ENCODE measurements at regions of chr4 and their contacts with region 1.

Region 1: GRCh38 chr4:81003597-81004111 is 26.9 kb upstream of the BMP3 start:
- DNase-seq: peak; percentile 95
- H3K4me3 ChIP-seq: peak overlapping the region; percentile 33
- H3K27ac ChIP-seq: peak overlapping the region; percentile 96
- H3K4me1 ChIP-seq: peaks cover 33% of the 10 kb centered on the region
- CTCF ChIP-seq: no peak

Region 2: DNA sequence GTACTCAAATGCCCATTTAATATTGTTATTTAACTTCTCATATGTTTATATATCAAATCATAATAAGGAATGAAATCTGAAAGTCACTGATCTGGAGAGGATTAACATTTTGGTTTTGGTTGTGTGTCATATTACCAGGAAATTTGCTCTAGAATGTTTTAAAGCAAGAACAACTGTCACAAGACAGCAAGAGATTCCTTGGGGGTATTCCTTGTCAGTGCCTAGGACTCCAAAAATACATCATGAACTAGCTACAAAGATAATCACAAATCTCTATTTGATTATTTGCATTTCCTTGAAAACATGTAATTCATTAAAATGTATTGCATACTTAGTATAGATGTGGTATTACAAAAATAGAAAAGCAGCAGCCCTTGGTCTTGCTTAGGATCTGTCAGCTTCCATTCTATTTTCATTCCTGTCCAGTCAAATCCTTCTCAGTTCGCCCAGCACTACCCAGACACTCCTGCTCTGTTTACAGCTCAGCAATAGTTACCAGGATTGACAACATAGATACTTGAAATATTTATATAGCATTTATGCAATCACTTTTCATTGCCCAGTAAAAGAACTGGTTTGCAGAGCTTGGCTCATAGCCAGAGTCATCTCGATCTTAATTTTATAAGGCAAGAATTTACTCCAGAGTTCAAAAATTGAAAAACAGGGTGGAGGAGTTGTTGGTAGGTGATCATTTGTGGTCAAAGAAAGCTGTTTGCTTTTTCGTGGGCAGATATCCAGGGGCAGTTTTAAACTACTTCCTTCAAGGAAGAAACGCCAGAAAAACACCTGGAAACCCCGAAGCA is 17.7 kb after region 1 on chr4:
- CTCF ChIA-PET with region 1: no interaction called
- POLR2A ChIA-PET with region 1: interaction called, 12 read pairs
- intact Hi-C with region 1: no loop called
- DNase-seq: no peak
- H3K4me3 ChIP-seq: peak overlapping the region; percentile 10
- H3K27ac ChIP-seq: peak overlapping the region; percentile 22
- H3K4me1 ChIP-seq: peaks cover 57% of the 10 kb centered on the region
- CTCF ChIP-seq: no peak

Region 3: DNA sequence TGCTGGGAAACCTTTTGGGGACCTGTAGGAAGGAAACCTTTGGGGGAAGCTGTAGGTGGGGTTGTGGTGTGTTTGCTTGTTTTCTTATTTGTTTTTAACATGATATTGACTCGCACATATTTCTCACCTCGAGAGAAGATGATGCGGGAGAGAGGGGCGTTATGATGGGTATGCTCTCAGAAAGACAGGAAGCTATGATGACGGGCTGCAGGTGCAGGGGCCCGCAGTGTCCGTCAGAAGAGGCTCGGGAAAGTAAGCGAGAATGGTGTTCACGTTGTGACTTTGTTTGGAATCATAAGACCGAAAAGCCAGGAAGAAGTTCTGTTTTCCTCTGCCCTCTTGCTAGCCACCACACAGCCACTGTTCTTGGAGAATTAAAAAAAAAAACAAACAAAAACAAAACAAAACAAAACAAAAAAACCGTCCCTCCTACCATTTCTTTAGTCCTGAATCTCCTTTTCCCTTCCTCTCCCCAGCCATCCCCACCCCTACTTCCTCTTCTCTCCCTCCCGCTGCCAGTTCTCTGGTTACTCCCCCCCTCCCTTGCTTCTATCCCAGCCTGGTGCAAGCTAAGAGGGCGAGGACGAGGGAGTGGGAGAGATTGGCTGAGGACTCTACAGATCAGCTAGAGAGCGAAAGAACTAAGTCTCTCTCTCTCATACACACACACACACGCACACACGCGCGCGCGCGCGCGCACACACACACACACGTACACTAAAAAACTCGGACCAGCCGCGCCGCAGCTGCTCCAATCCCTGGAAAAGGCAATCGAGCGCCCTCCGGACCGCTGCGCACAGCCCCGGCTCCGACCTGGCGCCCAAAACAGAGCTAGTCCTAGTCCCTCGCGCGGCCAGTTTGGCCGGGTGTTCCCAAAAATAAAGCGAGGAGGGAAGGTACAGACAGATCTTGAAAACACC is 26.7 kb after region 1 on chr4 and contains the start of gene BMP3:
- CTCF ChIA-PET with region 1: interaction called, 3 read pairs
- POLR2A ChIA-PET with region 1: interaction called, 72 read pairs
- intact Hi-C with region 1: loop called (anchors 1 kb)
- DNase-seq: peak; percentile 82
- H3K4me3 ChIP-seq: peak within 1 kb of the TSS; percentile 79
- H3K27ac ChIP-seq: peak within 1 kb of the TSS; percentile 92
- H3K4me1 ChIP-seq: peaks cover 55% of the 10 kb centered on the region
- CTCF ChIP-seq: no peak
- total RNA-seq, gene BMP3: 40.6 and 45.8 TPM in 2 replicates

Measured in OCI-LY7 (cell line).